ENCODE measurements at regions of chr11 and their contacts with region 1.

Region 1: GRCh38 chr11:119481021-119481666 is 58.2 kb upstream of the THY1 start:
- DNase-seq: peak; percentile 99
- H3K4me3 ChIP-seq: no peak overlapping the region
- H3K27ac ChIP-seq: no peak overlapping the region
- H3K4me1 ChIP-seq: peaks cover 8% of the 10 kb centered on the region
- H3K27me3 ChIP-seq: peaks cover 4% of the 10 kb centered on the region

Region 2: GRCh38 chr11:119144825-119145486 is 336.2 kb before region 1 on chr11:
- in situ Hi-C with region 1: no loop called
- DNase-seq: peak; percentile 81
- H3K4me3 ChIP-seq: no peak overlapping the region
- H3K27ac ChIP-seq: no peak overlapping the region
- H3K4me1 ChIP-seq: no peaks in the 10 kb centered on the region
- H3K27me3 ChIP-seq: peaks cover 12% of the 10 kb centered on the region; the same call in 1 of the 2 replicates

Region 3: DNA sequence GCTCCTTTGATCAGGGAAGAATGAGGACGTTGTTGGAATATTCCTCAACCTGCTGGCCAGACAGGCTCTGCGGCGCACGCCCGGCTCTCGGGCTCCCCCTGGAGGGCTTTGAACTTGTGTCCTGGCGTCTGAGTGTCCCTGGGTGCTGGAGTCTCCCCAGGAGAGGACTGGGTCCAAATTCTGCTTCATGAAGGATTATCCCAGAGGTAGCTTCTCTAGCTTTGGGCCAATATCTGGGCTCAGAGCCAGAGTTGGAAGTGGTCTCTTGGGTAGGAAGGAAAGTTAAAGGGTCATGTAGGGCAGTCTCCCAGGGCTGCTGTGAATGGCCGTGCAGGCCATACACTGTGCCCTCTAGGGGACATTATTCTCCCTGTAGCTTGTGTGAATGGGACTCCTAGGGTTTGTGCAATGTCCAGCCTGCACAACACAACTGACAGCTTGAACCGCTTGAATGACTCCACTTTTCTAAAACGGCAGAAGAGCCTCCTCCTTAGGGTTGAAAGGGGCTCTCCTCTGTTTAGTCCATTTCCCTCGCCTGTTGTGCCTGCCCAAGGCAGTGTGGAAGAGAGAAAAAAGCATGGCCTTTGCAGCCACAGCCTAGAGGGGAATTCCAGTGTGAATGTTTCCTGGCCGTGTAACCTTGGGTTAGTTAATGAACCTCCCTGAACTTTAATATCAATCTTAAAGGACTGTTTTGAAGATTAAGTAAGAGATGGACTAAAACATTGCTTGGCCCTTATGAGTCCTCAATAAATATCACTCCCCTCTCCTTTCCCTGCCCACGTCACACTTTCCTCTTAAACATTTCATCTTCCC is 53.0 kb after region 1 on chr11:
- in situ Hi-C with region 1: no loop called
- DNase-seq: peak; percentile 80
- H3K4me3 ChIP-seq: no peak overlapping the region
- H3K27ac ChIP-seq: no peak overlapping the region
- H3K4me1 ChIP-seq: peaks cover 7% of the 10 kb centered on the region; the same call in 1 of the 2 replicates
- H3K27me3 ChIP-seq: peaks cover 30% of the 10 kb centered on the region

Region 4: DNA sequence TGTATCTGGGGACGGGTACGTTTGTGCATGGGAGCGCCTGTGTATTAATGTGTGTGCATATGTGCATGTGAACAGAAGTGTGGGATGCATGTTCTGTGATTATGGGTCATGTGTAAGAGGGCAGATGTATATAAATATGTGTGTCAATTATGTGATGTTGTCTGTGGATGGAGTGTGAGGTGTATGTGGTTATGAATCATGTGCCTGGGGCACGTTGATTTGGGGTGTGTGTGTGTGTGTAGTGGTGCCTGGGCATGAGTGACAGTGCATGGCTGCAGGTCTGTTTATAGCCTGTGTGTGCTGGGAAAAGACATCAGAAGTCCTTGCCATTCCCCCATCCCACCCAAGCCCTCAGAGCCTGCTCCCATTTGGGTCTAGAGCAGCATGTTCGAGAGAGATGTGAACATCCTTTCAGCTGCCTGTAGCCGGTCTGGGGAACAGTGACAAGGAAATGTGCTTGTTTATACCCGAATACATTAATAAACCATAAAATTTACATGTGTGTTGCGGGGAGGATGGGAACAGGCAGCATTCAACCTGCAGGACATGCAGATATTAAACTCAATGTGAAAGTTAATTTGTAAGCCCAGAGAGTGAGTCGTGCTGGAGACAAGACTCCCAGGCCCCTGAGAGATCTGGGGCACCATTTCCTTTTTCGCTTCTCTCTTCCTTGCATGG is 118.9 kb after region 1 on chr11:
- in situ Hi-C with region 1: no loop called
- DNase-seq: no peak
- H3K4me3 ChIP-seq: no peak overlapping the region
- H3K27ac ChIP-seq: no peak overlapping the region
- H3K4me1 ChIP-seq: peaks cover 23% of the 10 kb centered on the region
- H3K27me3 ChIP-seq: no peaks in the 10 kb centered on the region

Region 5: DNA sequence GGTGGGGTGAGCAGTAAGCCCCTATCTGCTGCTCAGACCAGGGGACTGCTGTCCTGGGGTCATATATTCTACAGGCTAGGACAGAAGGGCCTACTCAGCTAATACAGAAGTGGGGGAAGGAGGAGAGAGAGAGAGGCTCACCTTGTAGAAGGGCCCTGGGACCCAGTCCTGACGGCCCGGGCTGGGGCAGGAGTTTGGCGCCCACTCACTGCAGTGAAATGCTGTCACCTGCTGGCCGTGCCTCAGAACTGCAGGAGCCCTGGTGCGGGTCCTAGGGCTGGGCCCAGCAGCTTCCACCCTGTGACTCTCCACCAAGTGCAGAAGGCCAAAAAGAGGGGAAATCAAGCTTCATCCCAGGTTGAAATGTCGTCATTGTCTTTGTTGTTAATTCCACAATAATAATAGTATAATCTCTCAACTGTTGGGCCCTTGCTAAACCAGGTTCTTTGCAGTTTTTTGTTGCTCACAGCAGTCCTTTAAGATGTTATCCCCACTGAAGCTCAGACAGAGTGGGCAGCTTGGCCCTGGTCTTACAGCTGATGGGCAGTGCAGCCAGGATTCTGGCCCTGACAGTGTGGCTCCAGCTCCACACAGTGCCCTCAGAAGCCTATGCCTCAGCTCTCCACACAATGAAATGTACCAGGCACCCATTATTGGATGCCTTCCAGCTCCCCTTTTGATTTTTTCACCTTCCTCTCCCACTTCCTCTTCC is 627.2 kb after region 1 on chr11:
- in situ Hi-C with region 1: loop called (anchors 25 kb)
- DNase-seq: peak; percentile 77
- H3K4me3 ChIP-seq: no peak overlapping the region
- H3K27ac ChIP-seq: no peak overlapping the region
- H3K4me1 ChIP-seq: no peaks in the 10 kb centered on the region
- H3K27me3 ChIP-seq: peaks cover 25% of the 10 kb centered on the region

Measured in GM23248 (cell line).